Activated CD4-positive, alpha-beta T cell treated with anti-CD3 and anti-CD28 coated beads, Interleukin-2, amount 10 ng/mL, durations not matched to agents 24 days and 14 days (primary cell): ENCODE measurements at regions of chr2 and their contacts with region 1.

Region 1: DNA sequence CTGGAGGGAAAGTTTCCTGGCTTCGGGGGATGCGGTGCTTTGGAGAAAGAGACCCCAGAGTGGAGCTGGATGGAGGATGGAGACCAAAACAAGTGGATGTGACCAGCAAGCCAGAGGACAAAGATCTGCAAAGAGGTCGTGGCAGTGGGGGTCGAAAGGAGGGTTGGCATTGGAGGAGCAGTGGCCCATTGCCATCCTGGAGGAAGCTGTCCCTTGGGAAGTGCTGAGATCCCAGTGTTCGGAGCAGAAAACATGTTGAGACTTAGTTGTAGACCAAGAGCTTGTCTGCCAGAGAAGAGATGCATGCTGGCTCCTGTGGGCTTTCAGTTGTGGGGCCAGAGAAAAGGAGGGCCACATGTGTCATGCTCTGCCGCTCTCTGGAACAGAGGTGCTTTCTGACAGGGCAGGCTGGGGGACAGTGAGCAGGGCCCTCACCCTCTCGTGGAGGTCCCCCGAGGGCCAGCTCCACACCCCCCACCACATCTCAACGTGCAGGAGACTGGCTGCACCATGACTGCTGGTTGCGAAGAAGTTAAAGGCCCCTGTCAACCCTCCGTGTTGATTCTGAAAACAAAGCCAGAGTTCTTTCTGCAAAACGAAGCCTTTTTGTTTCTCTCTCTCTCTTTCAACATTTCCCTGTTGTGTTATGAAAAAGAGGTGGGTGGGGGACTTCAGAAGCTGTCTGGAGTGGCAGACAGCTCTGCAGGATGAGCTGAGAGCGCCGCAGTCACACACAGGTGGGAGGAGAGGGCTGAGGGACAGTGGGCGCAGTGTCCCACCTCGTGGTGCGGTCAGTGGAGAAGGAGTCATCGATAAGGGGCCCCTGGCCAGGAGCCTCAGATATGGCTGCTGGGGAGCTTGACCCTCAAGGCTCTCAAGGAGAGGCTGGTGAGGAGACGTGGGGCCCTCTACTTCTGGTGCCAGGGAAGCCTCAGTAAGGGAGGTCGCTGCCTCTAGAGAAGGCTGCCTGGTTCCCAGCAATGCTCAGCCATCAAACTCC is 77.6 kb upstream of the BCL2L11 start:
- DNase-seq: no peak
- H3K4me3 Mint-ChIP-seq: peak overlapping the region; percentile 19
- H3K27ac Mint-ChIP-seq: peak overlapping the region; percentile 80
- H3K4me1 Mint-ChIP-seq: peaks cover 19% of the 10 kb centered on the region
- H3K27me3 Mint-ChIP-seq: peaks cover 46% of the 10 kb centered on the region

Region 2: DNA sequence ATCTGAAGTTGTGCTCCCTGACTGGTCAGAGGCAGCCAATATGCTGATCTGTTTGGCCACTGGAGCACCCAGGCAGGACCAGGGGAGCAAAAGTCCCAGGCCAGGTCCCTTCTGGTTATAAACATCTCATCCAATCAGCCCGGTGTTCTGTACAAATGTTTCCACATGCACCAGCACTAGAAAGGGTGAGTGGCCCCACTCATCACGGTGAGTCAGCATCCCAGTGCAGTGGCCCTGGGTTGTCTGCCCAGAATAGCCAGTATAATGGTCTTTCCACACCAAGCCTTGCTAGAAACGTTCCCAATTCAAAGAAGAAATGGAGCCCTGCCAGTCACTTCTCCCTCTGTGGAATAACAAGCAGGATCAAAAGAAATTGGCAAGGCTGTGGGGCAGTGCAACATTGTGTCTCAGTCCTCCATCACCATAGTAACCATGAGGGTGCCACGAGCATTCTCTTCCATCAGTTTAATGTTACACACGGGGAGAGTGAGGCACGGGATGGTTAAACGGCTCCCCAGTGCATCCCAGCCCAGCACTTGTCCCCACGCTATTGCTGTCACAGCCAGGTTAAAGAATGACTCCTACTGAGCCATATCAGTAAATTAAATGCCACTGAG is 1604.2 kb before region 1 on chr2:
- intact Hi-C with region 1: no loop called
- DNase-seq: no peak
- H3K4me3 Mint-ChIP-seq: no peak overlapping the region
- H3K27ac Mint-ChIP-seq: no peak overlapping the region
- H3K4me1 Mint-ChIP-seq: no peaks in the 10 kb centered on the region
- H3K27me3 Mint-ChIP-seq: no peaks in the 10 kb centered on the region

Region 3: DNA sequence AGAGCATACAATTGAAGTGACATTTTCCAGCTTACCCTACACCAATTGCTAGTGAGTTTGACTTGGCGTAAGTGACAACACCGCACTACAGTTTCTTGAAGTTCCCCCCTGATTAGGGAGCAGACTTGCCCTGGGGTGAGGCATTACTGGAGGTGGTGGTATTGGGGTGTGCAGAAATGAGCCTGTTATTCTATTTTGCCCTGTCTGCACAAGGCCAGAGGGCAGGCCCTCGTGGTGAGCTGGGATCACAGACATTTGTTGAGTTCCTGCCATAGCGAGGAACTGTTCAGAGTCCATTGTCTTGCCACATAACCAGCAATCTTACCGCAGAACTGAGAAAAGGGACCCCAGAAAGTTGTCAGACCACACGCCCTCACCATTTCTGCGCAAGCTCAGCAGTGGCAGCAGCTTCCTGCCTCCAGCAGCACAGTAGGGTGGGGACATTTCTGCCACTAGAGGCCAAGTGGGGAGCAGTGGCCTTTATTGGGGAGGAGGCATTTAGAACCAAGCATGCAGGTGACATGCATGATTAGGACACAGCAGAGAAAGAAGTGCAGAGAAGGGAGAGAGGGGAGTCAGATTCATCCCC is 25.9 kb before region 1 on chr2:
- intact Hi-C with region 1: no loop called
- DNase-seq: no peak
- H3K4me3 Mint-ChIP-seq: no peak overlapping the region
- H3K27ac Mint-ChIP-seq: no peak overlapping the region
- H3K4me1 Mint-ChIP-seq: no peaks in the 10 kb centered on the region
- H3K27me3 Mint-ChIP-seq: peaks cover 29% of the 10 kb centered on the region

Region 4: GRCh38 chr2:111054791-111055691 is 12.0 kb after region 1 on chr2:
- intact Hi-C with region 1: loop called (anchors 1 kb)
- DNase-seq: peak; percentile 61
- H3K4me3 Mint-ChIP-seq: peak overlapping the region; percentile 50
- H3K27ac Mint-ChIP-seq: peak overlapping the region; percentile 71
- H3K4me1 Mint-ChIP-seq: peaks cover 30% of the 10 kb centered on the region
- H3K27me3 Mint-ChIP-seq: peaks cover 41% of the 10 kb centered on the region